Left ventricle myocardium inferior (tissue), 1 donor: ENCODE measurements at regions of chr18 and their contacts with region 1.

Region 1: DNA sequence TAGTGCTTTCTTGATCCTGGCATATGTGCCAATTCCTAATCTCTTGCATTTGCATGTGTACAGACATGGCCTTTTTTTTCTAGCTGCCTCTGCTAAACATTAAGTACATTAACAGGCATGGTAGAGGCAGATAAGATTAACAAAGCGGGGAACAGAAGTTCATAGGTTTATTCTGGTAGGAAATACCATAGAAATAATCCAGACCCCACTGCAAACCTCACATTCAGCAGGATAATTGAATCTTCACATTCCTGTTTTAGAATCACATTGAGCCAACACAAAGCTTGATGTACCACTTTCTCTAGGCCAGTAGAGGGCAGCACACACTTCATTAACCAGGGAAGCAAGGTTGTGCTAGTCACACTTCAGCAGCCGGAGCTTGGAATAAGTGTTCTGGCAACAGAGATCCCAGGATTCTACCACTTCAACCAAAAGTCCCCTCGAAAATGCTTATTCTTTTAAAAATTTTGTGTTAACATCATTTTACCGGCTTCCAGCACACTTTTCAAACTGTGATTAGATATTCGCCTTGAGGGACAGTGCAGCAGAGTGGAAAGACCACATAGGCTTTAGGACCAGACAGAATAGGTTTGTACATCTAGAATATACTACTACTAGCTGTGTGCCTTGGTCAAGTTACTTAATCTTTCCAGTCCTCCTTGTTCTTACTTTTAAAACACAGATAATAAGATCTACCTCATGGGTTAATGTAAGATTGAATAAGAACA is 420.2 kb upstream of the CHST9 start:
- DNase-seq: no peak
- H3K4me3 ChIP-seq: no peak overlapping the region
- H3K27ac ChIP-seq: no peak overlapping the region
- H3K4me1 ChIP-seq: peaks cover 3% of the 10 kb centered on the region
- H3K27me3 ChIP-seq: no peaks in the 10 kb centered on the region
- CTCF ChIP-seq: peak; percentile 86

Region 2: GRCh38 chr18:27175914-27176313 is 429.4 kb before region 1 on chr18:
- intact Hi-C with region 1: loop called (anchors 10 kb)
- DNase-seq: no peak
- H3K4me3 ChIP-seq: no peak overlapping the region
- H3K27ac ChIP-seq: no peak overlapping the region
- H3K4me1 ChIP-seq: no peaks in the 10 kb centered on the region
- H3K27me3 ChIP-seq: no peaks in the 10 kb centered on the region
- CTCF ChIP-seq: no peak

Region 3: DNA sequence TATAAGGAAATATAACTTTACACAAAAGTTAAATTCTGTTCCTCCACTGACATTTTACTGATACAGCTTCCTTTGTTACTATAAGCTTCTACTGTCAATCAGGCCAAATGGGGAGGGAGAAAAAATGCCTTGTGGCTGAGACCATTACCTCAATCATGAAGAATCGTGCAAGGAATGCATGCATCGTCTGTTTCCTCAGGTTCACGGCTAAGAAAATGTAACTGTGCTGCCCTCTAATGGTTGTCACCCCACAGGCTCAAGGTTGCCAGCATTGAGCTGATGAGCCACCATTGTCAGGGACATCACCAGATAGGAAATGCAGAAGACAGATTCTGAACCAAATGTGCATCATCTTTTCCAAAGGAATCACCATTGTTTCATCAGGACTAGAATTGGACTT is 144.7 kb after region 1 on chr18:
- intact Hi-C with region 1: loop called (anchors 5 kb)
- DNase-seq: no peak
- H3K4me3 ChIP-seq: no peak overlapping the region
- H3K27ac ChIP-seq: no peak overlapping the region
- H3K4me1 ChIP-seq: no peaks in the 10 kb centered on the region
- H3K27me3 ChIP-seq: no peaks in the 10 kb centered on the region
- CTCF ChIP-seq: peak; percentile 73

Region 4: DNA sequence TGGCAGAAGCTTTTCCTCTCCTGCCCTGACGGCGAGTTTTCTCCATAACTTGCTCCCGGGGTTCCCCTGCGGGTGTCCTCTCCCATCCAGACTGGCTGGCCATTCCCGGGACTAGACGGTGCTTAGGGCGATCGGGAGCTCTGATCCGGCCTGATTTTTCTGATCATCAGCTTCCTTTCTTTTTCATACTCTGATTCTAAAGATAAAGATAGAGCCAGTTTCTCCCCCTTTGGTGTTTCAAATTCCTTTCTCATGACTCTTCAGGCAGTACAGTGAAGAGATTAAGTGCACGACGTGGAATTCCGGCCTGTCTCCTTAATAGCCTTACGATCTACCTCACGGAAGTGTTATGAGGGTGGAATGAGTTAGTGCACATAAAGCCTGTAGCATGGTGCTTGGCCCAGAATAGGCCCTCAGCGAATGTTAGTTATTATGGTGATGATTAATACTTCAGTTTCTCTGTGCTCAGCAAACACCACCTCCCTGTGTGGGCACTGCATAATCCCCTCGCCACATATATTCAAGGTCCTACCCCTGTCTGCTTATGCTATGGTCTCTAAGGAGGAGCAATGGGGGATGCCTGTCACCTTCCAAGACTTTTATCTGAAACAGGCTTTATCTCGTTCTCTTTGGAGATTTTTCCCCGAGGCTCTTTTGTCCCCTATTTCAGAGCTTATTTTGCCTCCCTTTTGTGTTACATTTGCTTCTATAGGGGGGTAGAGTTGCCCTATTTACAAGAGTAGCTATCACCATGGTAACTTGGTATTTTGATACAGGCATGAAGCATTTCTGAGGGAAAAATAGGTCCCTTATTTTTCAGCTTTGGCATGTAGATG is 316.9 kb after region 1 on chr18:
- intact Hi-C with region 1: no loop called
- DNase-seq: no peak
- H3K4me3 ChIP-seq: no peak overlapping the region
- H3K27ac ChIP-seq: no peak overlapping the region
- H3K4me1 ChIP-seq: no peaks in the 10 kb centered on the region
- H3K27me3 ChIP-seq: no peaks in the 10 kb centered on the region
- CTCF ChIP-seq: no peak